Ascending aorta (tissue), 2 donors: ENCODE measurements at regions of chr15 and their contacts with region 1.

Region 1: GRCh38 chr15:36294359-36294758 is 285.1 kb upstream of the CDIN1 start:
- DNase-seq: no peak
- H3K4me3 ChIP-seq: no peak overlapping the region
- H3K27ac ChIP-seq: no peak overlapping the region
- H3K4me1 ChIP-seq: no peaks in the 10 kb centered on the region
- H3K27me3 ChIP-seq: no peaks in the 10 kb centered on the region
- CTCF ChIP-seq: no peak

Region 2: GRCh38 chr15:36392676-36393266 is 98.4 kb after region 1 on chr15:
- intact Hi-C with region 1: loop called (anchors 10 kb)
- DNase-seq: no peak
- H3K4me3 ChIP-seq: no peak overlapping the region
- H3K27ac ChIP-seq: no peak overlapping the region
- H3K4me1 ChIP-seq: no peaks in the 10 kb centered on the region
- H3K27me3 ChIP-seq: no peaks in the 10 kb centered on the region
- CTCF ChIP-seq: no peak